BJ (cell line): ENCODE measurements at regions of chr14 and their contacts with region 1.

Region 1: DNA sequence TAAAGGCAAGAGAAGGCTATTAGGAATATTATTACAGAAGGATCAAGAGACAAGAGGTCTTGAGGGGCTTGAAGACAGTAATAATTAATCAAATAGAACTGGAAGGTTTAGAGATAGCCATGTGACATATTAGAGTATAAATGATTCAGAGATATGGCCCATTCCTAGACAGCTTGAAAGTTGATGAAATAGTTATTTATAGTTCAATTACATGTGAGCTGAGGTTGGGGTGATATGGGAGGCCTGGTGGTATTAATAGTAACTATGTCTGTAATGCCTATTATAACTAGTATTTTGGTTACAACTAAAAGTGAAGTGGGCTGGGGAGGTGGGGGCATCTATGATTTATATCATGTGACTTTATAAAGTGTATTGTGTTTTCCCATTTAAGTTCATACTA is 14.1 kb upstream of the MIS18BP1 start:
- DNase-seq: no peak
- H3K4me3 ChIP-seq: no peak overlapping the region
- H3K27me3 ChIP-seq: no peaks in the 10 kb centered on the region
- CTCF ChIP-seq: no peak

Region 2: GRCh38 chr14:45135659-45136314 is 131.3 kb before region 1 on chr14 and contains the start of gene FANCM:
- CTCF ChIA-PET with region 1: interaction called, 14 read pairs
- POLR2A ChIA-PET with region 1: no interaction called
- DNase-seq: peak; percentile 83
- H3K4me3 ChIP-seq: peak within 1 kb of the TSS; percentile 53
- H3K27me3 ChIP-seq: no peaks in the 10 kb centered on the region
- CTCF ChIP-seq: no peak
- polyA plus RNA-seq, gene FANCM: 1.9 and 3.4 TPM in 2 replicates

Region 3: DNA sequence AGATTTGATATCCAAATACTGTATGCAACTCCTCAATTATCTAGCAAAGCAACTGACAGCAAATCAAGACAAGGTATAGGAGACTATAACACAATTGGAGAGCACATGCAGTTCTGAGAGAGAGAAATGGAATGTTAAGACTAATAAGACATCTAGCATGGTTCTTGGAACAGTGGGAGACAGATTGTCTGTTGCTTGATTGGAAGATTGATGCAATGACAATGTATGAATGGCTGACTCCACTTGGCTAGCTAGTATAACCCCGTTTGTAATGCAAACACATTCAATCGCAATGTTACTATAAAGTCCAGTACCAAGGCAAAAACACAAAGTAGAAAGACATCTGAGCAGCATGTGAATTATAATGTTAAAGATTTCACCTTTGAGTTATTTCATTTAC is 1205.2 kb after region 1 on chr14:
- CTCF ChIA-PET with region 1: no interaction called
- POLR2A ChIA-PET with region 1: no interaction called
- DNase-seq: no peak
- H3K4me3 ChIP-seq: no peak overlapping the region
- H3K27me3 ChIP-seq: no peaks in the 10 kb centered on the region
- CTCF ChIP-seq: no peak